IMR-90 (cell line): ENCODE measurements at regions of chr9 and their contacts with region 1.

Region 1: GRCh38 chr9:116632990-116633838 is 53.9 kb upstream of the TRIM32 start:
- DNase-seq: peak; percentile 44
- ATAC-seq: peak; percentile 27; the same call in 1 of the 2 replicates
- H3K4me3 ChIP-seq: no peak overlapping the region
- H3K27ac ChIP-seq: no peak overlapping the region
- H3K4me1 ChIP-seq: no peaks in the 10 kb centered on the region
- H3K27me3 ChIP-seq: no peaks in the 10 kb centered on the region
- CTCF ChIP-seq: no peak
- POLR2A ChIP-seq: no peak
- RAD21 ChIP-seq: no peak

Region 2: DNA sequence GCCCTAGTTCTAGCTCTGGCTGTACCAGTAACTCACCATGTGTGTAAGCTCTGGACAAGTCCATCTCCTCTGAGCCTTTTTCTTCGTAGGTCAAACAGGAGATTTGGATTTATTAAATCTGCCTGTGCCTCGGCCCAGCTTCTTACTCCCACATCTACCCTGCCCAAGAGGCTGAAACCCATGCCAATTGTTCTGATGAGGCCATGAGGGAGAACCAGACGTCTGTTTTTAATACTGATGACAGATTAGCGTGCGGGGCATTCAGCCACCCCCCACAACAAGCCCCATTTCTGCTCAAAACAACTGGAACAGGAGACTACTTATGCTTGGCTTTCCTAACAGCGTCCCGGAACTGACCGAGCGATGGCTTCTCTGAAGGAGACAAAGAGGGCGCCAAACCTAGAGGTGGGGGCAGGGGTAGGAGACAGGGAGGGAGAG is 27.3 kb before region 1 on chr9:
- CTCF ChIA-PET with region 1: interaction called, 3 read pairs
- POLR2A ChIA-PET with region 1: no interaction called
- dilution Hi-C with region 1: no loop called
- in situ Hi-C with region 1: no loop called
- intact Hi-C with region 1: loop called (anchors 1 kb)
- DNase-seq: no peak
- ATAC-seq: no peak
- H3K4me3 ChIP-seq: no peak overlapping the region
- H3K27ac ChIP-seq: no peak overlapping the region
- H3K4me1 ChIP-seq: no peaks in the 10 kb centered on the region
- H3K27me3 ChIP-seq: no peaks in the 10 kb centered on the region
- CTCF ChIP-seq: no peak
- POLR2A ChIP-seq: no peak
- RAD21 ChIP-seq: no peak

Region 3: GRCh38 chr9:116646661-116647512 is 13.7 kb after region 1 on chr9:
- CTCF ChIA-PET with region 1: no interaction called
- POLR2A ChIA-PET with region 1: no interaction called
- dilution Hi-C with region 1: no loop called
- in situ Hi-C with region 1: no loop called
- intact Hi-C with region 1: no loop called
- DNase-seq: peak; percentile 61
- ATAC-seq: peak; percentile 80
- H3K4me3 ChIP-seq: no peak overlapping the region
- H3K27ac ChIP-seq: no peak overlapping the region
- H3K4me1 ChIP-seq: peaks cover 4% of the 10 kb centered on the region
- H3K27me3 ChIP-seq: no peaks in the 10 kb centered on the region
- CTCF ChIP-seq: peak; percentile 72
- POLR2A ChIP-seq: no peak
- RAD21 ChIP-seq: peak; percentile 79